Left ventricle myocardium inferior (tissue), 1 donor: ENCODE measurements at regions of chr1 and their contacts with region 1.

Region 1: GRCh38 chr1:172745014-172745413 is 86.1 kb downstream of the FASLG start:
- DNase-seq: no peak
- H3K4me3 ChIP-seq: no peak overlapping the region
- H3K27ac ChIP-seq: no peak overlapping the region
- H3K4me1 ChIP-seq: peaks cover 13% of the 10 kb centered on the region
- H3K27me3 ChIP-seq: peaks cover 13% of the 10 kb centered on the region
- CTCF ChIP-seq: peak; percentile 64

Region 2: DNA sequence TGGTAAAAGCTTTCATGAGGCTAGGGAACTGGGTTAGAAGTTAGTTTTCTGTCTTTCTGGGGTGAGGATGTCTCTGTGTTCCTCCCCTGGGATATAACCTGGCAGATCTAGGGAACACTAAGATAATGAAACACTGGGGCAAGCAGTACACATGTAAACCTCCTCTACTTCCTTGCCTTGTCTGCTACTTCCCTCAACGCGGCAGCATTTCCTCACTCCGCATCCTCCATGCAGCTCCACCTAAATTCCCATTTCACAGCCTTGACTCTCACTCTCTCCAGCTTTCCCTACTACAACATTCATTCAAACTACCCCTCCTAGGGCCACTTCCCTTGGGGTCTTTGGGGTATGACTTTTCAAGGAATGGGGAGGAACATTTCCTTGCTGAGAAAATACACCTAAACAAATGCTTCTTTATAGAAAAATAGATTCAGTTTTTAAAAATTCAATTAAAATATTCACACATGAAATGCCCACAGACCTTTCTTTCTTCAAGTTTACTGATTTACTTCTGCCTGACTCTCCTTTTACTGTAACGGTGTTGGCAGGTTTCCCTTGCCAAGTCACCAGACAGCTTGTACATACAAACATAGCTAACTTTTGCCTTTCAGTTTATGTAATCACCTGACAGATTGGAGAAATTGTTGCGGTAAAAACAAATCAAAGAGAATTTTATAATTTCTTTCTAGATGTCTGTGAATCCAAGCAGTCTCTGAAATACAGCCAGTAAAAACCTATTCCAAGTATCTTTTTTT is 215.6 kb after region 1 on chr1:
- intact Hi-C with region 1: no loop called
- DNase-seq: no peak
- H3K4me3 ChIP-seq: no peak overlapping the region
- H3K27ac ChIP-seq: no peak overlapping the region
- H3K4me1 ChIP-seq: peaks cover 4% of the 10 kb centered on the region
- H3K27me3 ChIP-seq: no peaks in the 10 kb centered on the region
- CTCF ChIP-seq: peak; percentile 9

Region 3: GRCh38 chr1:173202430-173203145 is 457.6 kb after region 1 on chr1:
- intact Hi-C with region 1: loop called (anchors 5 kb)
- DNase-seq: no peak
- H3K4me3 ChIP-seq: no peak overlapping the region
- H3K27ac ChIP-seq: no peak overlapping the region
- H3K4me1 ChIP-seq: peaks cover 27% of the 10 kb centered on the region
- H3K27me3 ChIP-seq: no peaks in the 10 kb centered on the region
- CTCF ChIP-seq: peak; percentile 76

Region 4: DNA sequence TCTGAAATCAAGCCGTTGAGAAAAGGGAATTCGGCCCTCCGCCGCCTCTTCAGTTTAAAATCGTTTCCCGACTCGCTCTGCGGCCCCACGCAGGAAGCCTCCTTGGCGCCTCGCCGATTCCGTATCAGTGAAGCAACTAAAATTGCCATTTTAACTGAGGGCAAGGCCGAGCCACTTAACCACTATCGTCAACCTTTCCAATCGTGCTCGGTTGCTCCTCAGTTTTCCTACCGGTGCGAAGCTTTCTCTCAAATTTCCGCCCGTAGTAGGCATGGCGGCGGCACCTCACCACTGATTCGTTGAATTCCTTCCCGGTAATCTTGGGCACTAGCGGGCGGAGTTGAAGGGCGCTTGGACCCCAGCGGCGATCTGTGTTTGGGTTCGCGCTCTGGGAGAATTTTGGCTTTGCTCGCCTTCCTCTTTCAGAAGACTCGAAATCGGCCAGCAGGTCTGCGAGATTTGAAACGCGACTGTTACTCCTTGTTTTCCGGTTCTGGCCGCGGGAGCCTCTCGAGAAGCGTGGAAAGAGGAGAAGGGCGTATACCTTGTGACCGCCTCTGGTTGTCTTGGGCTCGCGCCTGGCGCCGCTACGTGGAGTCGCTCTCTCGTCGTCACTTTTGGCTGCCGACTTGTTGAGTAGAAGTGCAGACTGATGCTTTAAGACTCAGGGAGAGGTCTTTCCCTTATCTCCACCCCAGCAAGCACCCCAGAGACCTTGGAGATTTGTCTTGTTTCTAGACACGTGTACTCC is 1079.5 kb after region 1 on chr1 and contains the starts of genes CENPL and DARS2:
- intact Hi-C with region 1: loop called (anchors 10 kb)
- DNase-seq: peak; percentile 96
- H3K4me3 ChIP-seq: peak within 1 kb of the TSS; percentile 91
- H3K27ac ChIP-seq: peak within 1 kb of the TSS; percentile 97
- H3K4me1 ChIP-seq: peaks cover 30% of the 10 kb centered on the region
- H3K27me3 ChIP-seq: no peaks in the 10 kb centered on the region
- CTCF ChIP-seq: no peak
- total RNA-seq, gene CENPL: 4.2 TPM
- total RNA-seq, gene DARS2: 15.1 TPM